Dorsolateral prefrontal cortex (tissue), 120 donors: ENCODE measurements at regions of chr3 and their contacts with region 1.

Region 1: GRCh38 chr3:125374996-125375941 is at the start of gene ZNF148:
- DNase-seq: peak; percentile 83 to 94 (median 88)
- H3K4me3 ChIP-seq: peak within 1 kb of the TSS; percentile 60 to 98 (median 86)
- H3K27ac ChIP-seq: peak within 1 kb of the TSS; percentile 73 to 97 (median 91)
- H3K27me3 ChIP-seq: no peaks in the 10 kb centered on the region
- CTCF ChIP-seq: peak in 51 of 56 donors; percentile 15 to 67 (median 44)
- total RNA-seq, gene ZNF148: 55.2 to 94.4 (median 74.4) TPM

Region 2: GRCh38 chr3:125280668-125281361 is 94.5 kb before region 1 on chr3:
- intact Hi-C with region 1: loop called in 1 of 2 experiments (anchors 10 kb)
- DNase-seq: peak in 4 of 10 donors; percentile 11 to 59 (median 34)
- H3K4me3 ChIP-seq: no peak overlapping the region
- H3K27ac ChIP-seq: peak overlapping the region in 18 of 59 donors; percentile 0 to 59 (median 28)
- H3K27me3 ChIP-seq: no peaks in the 10 kb centered on the region
- CTCF ChIP-seq: no peak

Region 3: DNA sequence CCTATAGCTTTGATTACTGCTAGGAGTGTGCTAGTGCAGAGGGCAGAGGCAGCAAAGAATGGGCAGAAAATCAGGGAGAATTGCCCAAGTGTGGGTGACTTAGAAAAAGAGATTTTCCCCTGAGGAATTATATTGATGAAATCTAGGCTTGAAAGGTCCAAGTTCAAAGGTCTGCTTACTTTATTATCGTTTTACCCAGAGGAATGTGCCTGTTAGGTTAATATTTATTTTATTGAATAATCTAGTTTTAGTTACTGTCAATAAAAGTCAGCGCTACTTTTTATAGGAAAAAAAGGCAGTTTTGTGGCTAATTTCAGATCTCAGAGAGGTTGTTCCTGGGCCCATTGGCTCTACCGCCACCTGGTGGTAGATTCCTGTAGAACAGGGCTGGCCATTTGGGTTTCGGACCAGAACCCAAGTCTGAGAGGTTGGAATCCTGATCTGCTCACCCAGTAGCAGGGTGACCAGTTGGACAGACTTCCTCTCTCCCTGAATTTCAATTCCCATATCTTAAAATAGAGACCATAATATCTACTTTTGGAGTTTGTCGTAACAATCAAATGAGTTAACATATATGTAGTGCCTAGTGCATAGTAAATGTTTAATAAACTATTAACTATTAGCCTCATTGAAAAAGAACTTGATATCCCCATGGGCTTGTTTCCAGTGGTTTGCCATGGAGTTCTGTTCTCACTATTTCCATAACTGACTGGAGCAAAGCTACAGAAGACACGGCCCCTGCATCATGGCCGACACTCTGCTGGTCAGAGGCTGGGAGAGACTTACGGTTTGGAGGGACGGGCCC is 62.6 kb after region 1 on chr3:
- intact Hi-C with region 1: loop called in 1 of 2 experiments (anchors 5 kb)
- DNase-seq: peak; percentile 34 to 75 (median 62)
- H3K4me3 ChIP-seq: no peak overlapping the region
- H3K27ac ChIP-seq: no peak overlapping the region
- H3K27me3 ChIP-seq: no peaks in the 10 kb centered on the region
- CTCF ChIP-seq: peak; percentile 93 to 100 (median 98)

Region 4: DNA sequence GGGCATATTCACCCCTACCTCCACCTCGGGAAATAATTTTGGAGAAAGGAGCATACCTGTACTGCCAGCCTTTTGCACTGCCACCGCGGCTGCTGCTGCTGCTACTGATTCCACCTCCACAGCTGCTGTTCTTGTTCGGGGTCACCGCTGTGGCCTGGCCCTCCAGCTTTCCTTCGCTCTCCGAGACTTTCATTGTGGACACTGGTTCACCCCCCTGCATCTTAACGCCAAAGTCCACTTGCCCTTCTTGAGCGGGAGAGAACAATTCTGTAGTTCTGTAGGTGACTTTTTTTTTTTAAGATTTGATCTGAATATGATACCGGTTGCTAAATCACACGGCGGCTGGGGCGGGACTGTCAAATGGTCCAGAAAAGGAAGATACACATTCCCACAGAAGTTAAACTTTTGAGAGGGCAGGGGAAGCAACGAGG is 219.3 kb after region 1 on chr3:
- intact Hi-C with region 1: loop called (anchors 2 to 5 kb)
- DNase-seq: peak in 1 of 10 donors; percentile 5
- H3K4me3 ChIP-seq: peak overlapping the region; percentile 51 to 98 (median 87)
- H3K27ac ChIP-seq: peak overlapping the region; percentile 30 to 96 (median 91)
- H3K27me3 ChIP-seq: no peaks in the 10 kb centered on the region
- CTCF ChIP-seq: no peak